ENCODE measurements at regions of chr1 and their contacts with region 1.

Region 1: DNA sequence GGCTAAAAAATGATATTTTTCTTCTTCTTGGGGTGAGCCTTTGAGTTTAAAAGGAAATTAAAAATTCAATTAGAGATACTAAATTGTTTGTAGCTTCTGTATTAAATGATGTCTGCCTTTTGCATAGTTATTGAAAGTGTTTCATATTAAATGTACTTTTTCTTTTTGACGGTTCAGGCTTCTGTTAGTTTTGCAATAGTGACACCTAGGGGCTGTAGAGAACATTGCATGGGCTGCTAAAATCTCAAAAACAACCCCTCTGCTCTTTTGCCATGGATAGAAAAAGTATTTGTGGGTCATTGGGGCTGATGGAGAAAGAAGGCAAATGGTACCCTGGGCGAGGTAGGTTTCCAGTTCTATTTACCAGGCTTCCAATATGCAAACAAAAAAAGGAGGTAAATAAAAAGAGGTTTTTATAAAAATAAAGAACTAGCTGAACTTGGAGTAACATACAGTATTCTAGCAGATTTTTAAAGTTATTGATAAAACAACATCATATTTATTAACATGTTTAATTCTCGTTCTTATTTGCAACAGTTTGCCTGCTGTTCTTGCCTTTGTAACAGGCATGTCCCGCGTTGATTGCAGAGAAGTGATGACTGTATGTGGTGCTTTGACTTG is 115.4 kb upstream of the HOOK1 start:
- DNase-seq: peak in 4 of 5 donors; percentile 42 to 49 (median 48)
- H3K4me3 ChIP-seq: no peak overlapping the region
- H3K4me3 Mint-ChIP-seq: no peak overlapping the region
- H3K27ac ChIP-seq: no peak overlapping the region
- H3K27ac Mint-ChIP-seq: no peak overlapping the region
- H3K4me1 ChIP-seq: peaks cover 22% of the 10 kb centered on the region
- H3K4me1 Mint-ChIP-seq: peaks cover 13 to 19% (median 15%) of the 10 kb centered on the region in 4 donors
- H3K27me3 ChIP-seq: no peaks in the 10 kb centered on the region
- H3K27me3 Mint-ChIP-seq: peaks cover 0 to 2% of the 10 kb centered on the region in 2 donors

Region 2: DNA sequence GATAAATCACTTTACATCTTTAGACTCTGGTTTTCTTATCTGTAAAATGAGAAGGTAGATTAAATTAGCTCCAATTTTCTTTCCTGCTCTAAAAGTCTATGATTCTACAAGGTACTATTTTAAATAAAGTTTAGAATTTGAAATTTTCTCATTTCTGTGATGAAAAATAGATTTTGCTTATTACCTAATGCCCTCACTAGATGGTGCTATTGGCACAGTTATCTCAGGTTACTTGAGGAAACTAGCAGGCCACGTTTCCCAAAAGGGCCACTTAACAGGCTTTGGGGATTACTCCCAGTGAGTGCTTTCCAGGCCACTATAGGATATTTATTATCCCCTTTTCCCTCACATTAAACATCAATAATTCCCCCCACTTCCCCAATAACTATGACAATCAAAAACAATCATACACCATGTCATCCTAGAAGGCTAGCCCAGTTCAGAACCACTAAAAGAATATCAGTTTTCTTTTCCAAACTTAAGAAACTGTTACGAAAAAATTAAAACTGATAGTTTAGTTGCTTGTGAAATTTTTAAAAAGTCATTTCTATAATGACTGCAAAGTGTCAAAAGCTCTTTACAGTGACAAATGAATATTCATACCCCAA is 1183.4 kb before region 1 on chr1:
- CTCF ChIA-PET with region 1: interaction called, 10 read pairs
- POLR2A ChIA-PET with region 1: no interaction called
- intact Hi-C with region 1: no loop called
- DNase-seq: peak; percentile 33 to 60 (median 55)
- H3K4me3 ChIP-seq: no peak overlapping the region
- H3K4me3 Mint-ChIP-seq: no peak overlapping the region
- H3K27ac ChIP-seq: no peak overlapping the region
- H3K27ac Mint-ChIP-seq: peak overlapping the region; percentile 54 to 92 (median 77)
- H3K4me1 ChIP-seq: peaks cover 4% of the 10 kb centered on the region
- H3K4me1 Mint-ChIP-seq: peaks cover 5 to 13% (median 7%) of the 10 kb centered on the region in 4 donors
- H3K27me3 ChIP-seq: no peaks in the 10 kb centered on the region
- H3K27me3 Mint-ChIP-seq: no peaks in the 10 kb centered on the region

Region 3: GRCh38 chr1:58748666-58749065 is 950.7 kb before region 1 on chr1:
- CTCF ChIA-PET with region 1: interaction called, 161 read pairs
- POLR2A ChIA-PET with region 1: no interaction called
- intact Hi-C with region 1: no loop called
- DNase-seq: no peak
- H3K4me3 ChIP-seq: no peak overlapping the region
- H3K4me3 Mint-ChIP-seq: no peak overlapping the region
- H3K27ac ChIP-seq: no peak overlapping the region
- H3K27ac Mint-ChIP-seq: no peak overlapping the region
- H3K4me1 ChIP-seq: no peaks in the 10 kb centered on the region
- H3K4me1 Mint-ChIP-seq: peaks cover 3 to 14% (median 10%) of the 10 kb centered on the region in 4 donors
- H3K27me3 ChIP-seq: no peaks in the 10 kb centered on the region
- H3K27me3 Mint-ChIP-seq: peaks cover 3 to 7% of the 10 kb centered on the region in 2 donors

Region 4: GRCh38 chr1:58768971-58769808 is 930.1 kb before region 1 on chr1:
- CTCF ChIA-PET with region 1: interaction called, 11 read pairs
- POLR2A ChIA-PET with region 1: no interaction called
- intact Hi-C with region 1: no loop called
- DNase-seq: no peak
- H3K4me3 ChIP-seq: no peak overlapping the region
- H3K4me3 Mint-ChIP-seq: no peak overlapping the region
- H3K27ac ChIP-seq: no peak overlapping the region
- H3K27ac Mint-ChIP-seq: no peak overlapping the region
- H3K4me1 ChIP-seq: peaks cover 6% of the 10 kb centered on the region
- H3K4me1 Mint-ChIP-seq: peaks cover 0 to 11% (median 8%) of the 10 kb centered on the region in 4 donors
- H3K27me3 ChIP-seq: no peaks in the 10 kb centered on the region
- H3K27me3 Mint-ChIP-seq: peaks cover 1 to 2% of the 10 kb centered on the region in 2 donors

Region 5: DNA sequence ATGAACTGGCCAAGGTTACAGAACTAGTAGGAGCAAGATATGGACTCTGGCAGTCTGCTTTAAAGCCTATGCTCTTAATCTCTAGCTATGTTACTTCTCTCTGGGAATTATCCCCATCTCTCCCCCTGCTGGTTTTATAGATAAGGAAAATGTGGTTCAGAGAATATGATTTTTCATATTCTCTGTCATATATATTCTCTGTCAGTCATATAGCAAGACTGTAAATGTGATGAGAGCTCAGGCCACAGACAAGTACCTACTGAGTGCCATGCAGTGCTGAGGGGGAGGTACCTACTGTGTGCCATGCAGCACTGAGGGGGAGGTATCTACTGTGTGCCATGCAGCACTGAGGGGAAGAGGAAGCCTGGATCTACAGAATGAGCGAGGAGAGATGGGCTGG is 622.7 kb before region 1 on chr1:
- CTCF ChIA-PET with region 1: interaction called, 12 read pairs
- POLR2A ChIA-PET with region 1: no interaction called
- intact Hi-C with region 1: loop called (anchors 5 kb)
- DNase-seq: no peak
- H3K4me3 ChIP-seq: no peak overlapping the region
- H3K4me3 Mint-ChIP-seq: no peak overlapping the region
- H3K27ac ChIP-seq: no peak overlapping the region
- H3K27ac Mint-ChIP-seq: peak overlapping the region in 1 of 7 donors; percentile 43
- H3K4me1 ChIP-seq: peaks cover 12% of the 10 kb centered on the region
- H3K4me1 Mint-ChIP-seq: peaks cover 8 to 16% (median 12%) of the 10 kb centered on the region in 4 donors
- H3K27me3 ChIP-seq: no peaks in the 10 kb centered on the region
- H3K27me3 Mint-ChIP-seq: peaks cover 0 to 5% of the 10 kb centered on the region in 2 donors

Region 6: DNA sequence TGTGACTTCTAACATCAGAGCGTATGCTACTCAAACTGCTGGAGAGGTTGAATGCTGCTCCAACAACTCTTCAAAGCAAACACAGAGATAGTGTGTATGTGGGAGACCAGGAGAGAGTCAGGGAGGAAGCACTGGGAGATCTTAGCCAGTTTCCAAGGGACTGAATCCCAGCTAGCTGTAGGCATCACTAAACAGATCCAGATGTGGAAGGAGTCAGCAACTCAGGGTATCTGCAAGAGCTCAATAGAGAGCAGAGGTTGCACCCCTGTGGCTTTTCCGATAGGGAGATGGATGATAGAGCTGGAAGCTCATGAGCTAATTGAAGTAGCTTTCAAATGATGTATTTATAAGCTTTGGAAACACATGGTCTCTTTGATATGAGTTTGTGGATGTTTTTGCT is 53.4 kb before region 1 on chr1:
- CTCF ChIA-PET with region 1: no interaction called
- POLR2A ChIA-PET with region 1: no interaction called
- intact Hi-C with region 1: no loop called
- DNase-seq: no peak
- H3K4me3 ChIP-seq: no peak overlapping the region
- H3K4me3 Mint-ChIP-seq: no peak overlapping the region
- H3K27ac ChIP-seq: no peak overlapping the region
- H3K27ac Mint-ChIP-seq: no peak overlapping the region
- H3K4me1 ChIP-seq: no peaks in the 10 kb centered on the region
- H3K4me1 Mint-ChIP-seq: no peaks in the 10 kb centered on the region
- H3K27me3 ChIP-seq: no peaks in the 10 kb centered on the region
- H3K27me3 Mint-ChIP-seq: no peaks in the 10 kb centered on the region

Region 7: GRCh38 chr1:59759156-59759925 is 60.0 kb after region 1 on chr1:
- CTCF ChIA-PET with region 1: interaction called, 15 read pairs
- POLR2A ChIA-PET with region 1: no interaction called
- intact Hi-C with region 1: loop called (anchors 1 kb)
- DNase-seq: peak; percentile 58 to 67 (median 63)
- H3K4me3 ChIP-seq: no peak overlapping the region
- H3K4me3 Mint-ChIP-seq: peak overlapping the region in 3 of 8 donors; percentile 47 to 59 (median 59)
- H3K27ac ChIP-seq: no peak overlapping the region
- H3K27ac Mint-ChIP-seq: peak overlapping the region in 1 of 7 donors; percentile 53
- H3K4me1 ChIP-seq: peaks cover 3% of the 10 kb centered on the region
- H3K4me1 Mint-ChIP-seq: peaks cover 0 to 4% (median 3%) of the 10 kb centered on the region in 4 donors
- H3K27me3 ChIP-seq: no peaks in the 10 kb centered on the region
- H3K27me3 Mint-ChIP-seq: no peaks in the 10 kb centered on the region

Measured in CD4-positive, alpha-beta memory T cell (primary cell).